Activated naive CD4-positive, alpha-beta T cell treated with anti-CD3 and anti-CD28 coated beads, Interleukin-2, amount 10 ng/mL, durations not matched to agents 7 days and 5 days (primary cell): ENCODE measurements at regions of chr1 and their contacts with region 1.

Region 1: GRCh38 chr1:196148367-196148970 is 459.8 kb downstream of the KCNT2 start:
- DNase-seq: no peak
- H3K4me3 Mint-ChIP-seq: no peak overlapping the region
- H3K27ac Mint-ChIP-seq: no peak overlapping the region
- H3K4me1 Mint-ChIP-seq: no peaks in the 10 kb centered on the region
- H3K27me3 Mint-ChIP-seq: no peaks in the 10 kb centered on the region

Region 2: DNA sequence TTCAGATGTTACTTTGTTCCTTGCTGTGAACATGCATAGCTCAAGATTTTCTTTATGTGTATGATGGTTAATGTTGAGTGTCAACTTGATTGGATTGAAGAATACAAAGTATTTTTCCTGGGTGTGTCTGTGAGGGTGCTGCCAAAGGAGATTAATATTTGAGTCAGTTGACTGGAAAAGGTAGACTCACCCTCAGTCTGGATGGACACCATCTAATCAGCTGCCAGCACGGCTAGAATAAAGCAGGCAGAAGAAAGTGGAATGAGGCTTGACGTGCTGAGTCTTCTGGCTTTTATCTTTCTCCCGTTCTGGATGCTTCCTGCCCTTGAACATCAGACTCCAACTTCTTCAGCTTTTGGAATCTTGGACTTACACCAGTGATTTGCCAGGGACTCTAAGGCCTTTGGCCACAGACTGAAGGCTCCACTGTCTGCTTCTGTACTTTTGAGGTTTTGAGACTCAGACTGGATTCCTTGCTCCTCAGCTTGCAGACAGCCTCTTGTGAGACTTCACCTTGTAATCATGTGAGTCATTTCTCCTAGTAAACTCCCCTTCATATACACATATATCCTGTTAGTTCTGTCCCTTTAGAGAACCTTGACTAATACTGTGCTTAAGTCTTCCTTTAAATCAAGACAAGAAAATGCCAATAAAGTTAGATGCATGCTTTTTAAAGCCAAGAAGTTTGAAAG is 166.9 kb before region 1 on chr1:
- CTCF ChIA-PET with region 1: no interaction called
- DNase-seq: no peak
- H3K4me3 Mint-ChIP-seq: no peak overlapping the region
- H3K27ac Mint-ChIP-seq: no peak overlapping the region
- H3K4me1 Mint-ChIP-seq: no peaks in the 10 kb centered on the region
- H3K27me3 Mint-ChIP-seq: no peaks in the 10 kb centered on the region

Region 3: GRCh38 chr1:196160066-196160795 is 11.8 kb after region 1 on chr1:
- CTCF ChIA-PET with region 1: no interaction called
- DNase-seq: no peak
- H3K4me3 Mint-ChIP-seq: no peak overlapping the region
- H3K27ac Mint-ChIP-seq: no peak overlapping the region
- H3K4me1 Mint-ChIP-seq: no peaks in the 10 kb centered on the region
- H3K27me3 Mint-ChIP-seq: no peaks in the 10 kb centered on the region

Region 4: GRCh38 chr1:196180847-196181593 is 32.6 kb after region 1 on chr1:
- CTCF ChIA-PET with region 1: no interaction called
- DNase-seq: no peak
- H3K4me3 Mint-ChIP-seq: no peak overlapping the region
- H3K27ac Mint-ChIP-seq: no peak overlapping the region
- H3K4me1 Mint-ChIP-seq: no peaks in the 10 kb centered on the region
- H3K27me3 Mint-ChIP-seq: no peaks in the 10 kb centered on the region

Region 5: GRCh38 chr1:196660852-196661251 is 512.4 kb after region 1 on chr1:
- CTCF ChIA-PET with region 1: interaction called, 18 read pairs
- DNase-seq: no peak
- H3K4me3 Mint-ChIP-seq: no peak overlapping the region
- H3K27ac Mint-ChIP-seq: no peak overlapping the region
- H3K4me1 Mint-ChIP-seq: no peaks in the 10 kb centered on the region
- H3K27me3 Mint-ChIP-seq: no peaks in the 10 kb centered on the region